Activated CD4-positive, alpha-beta T cell treated with anti-CD3 and anti-CD28 coated beads for 36 hours (primary cell): ENCODE measurements at regions of chr2 and their contacts with region 1.

Region 1: GRCh38 chr2:190369635-190370034 is 26.2 kb downstream of the INPP1 start:
- DNase-seq: no peak
- ATAC-seq: no peak
- H3K4me3 Mint-ChIP-seq: no peak overlapping the region
- H3K27ac Mint-ChIP-seq: no peak overlapping the region
- H3K4me1 Mint-ChIP-seq: no peaks in the 10 kb centered on the region
- H3K27me3 Mint-ChIP-seq: no peaks in the 10 kb centered on the region

Region 2: DNA sequence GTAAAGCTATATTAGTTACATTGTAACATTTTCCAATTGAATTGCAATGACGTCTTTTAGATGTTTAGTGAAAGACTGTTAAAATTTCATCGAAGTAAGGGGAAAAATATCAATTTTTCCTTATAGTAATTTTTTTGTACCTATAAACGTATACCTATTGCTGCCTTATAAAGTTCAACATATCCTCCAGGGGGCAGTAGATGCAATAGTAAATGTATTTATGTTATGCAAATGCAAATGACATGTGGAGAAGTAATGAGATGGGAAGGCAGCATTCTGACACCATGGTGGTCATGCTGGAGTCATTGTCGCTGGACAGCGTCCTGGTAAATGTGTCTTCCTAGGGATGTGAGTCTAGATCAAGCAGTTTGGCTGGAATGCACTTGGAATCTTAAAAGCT is 345.8 kb before region 1 on chr2:
- CTCF ChIA-PET with region 1: no interaction called
- POLR2A ChIA-PET with region 1: no interaction called
- intact Hi-C with region 1: loop called in 1 of 2 experiments (anchors 5 kb)
- DNase-seq: no peak
- ATAC-seq: peak; percentile 61
- H3K4me3 Mint-ChIP-seq: no peak overlapping the region
- H3K27ac Mint-ChIP-seq: no peak overlapping the region
- H3K4me1 Mint-ChIP-seq: no peaks in the 10 kb centered on the region
- H3K27me3 Mint-ChIP-seq: peaks cover 11% of the 10 kb centered on the region

Region 3: GRCh38 chr2:190277234-190278112 is 92.2 kb before region 1 on chr2:
- CTCF ChIA-PET with region 1: no interaction called
- POLR2A ChIA-PET with region 1: no interaction called
- intact Hi-C with region 1: loop called in 1 of 2 experiments (anchors 5 kb)
- DNase-seq: peak; percentile 45
- ATAC-seq: peak; percentile 76
- H3K4me3 Mint-ChIP-seq: no peak overlapping the region
- H3K27ac Mint-ChIP-seq: no peak overlapping the region
- H3K4me1 Mint-ChIP-seq: peaks cover 3% of the 10 kb centered on the region
- H3K27me3 Mint-ChIP-seq: no peaks in the 10 kb centered on the region

Region 4: GRCh38 chr2:191666732-191667131 is 1297.1 kb after region 1 on chr2:
- CTCF ChIA-PET with region 1: no interaction called
- POLR2A ChIA-PET with region 1: no interaction called
- intact Hi-C with region 1: no loop called
- DNase-seq: no peak
- ATAC-seq: peak; percentile 79
- H3K4me3 Mint-ChIP-seq: no peak overlapping the region
- H3K27ac Mint-ChIP-seq: peak overlapping the region; percentile 30
- H3K4me1 Mint-ChIP-seq: peaks cover 20% of the 10 kb centered on the region
- H3K27me3 Mint-ChIP-seq: no peaks in the 10 kb centered on the region